Endothelial cell of umbilical vein (primary cell): ENCODE measurements at regions of chr11 and their contacts with region 1.

Region 1: GRCh38 chr11:104404419-104405175 is 240.7 kb upstream of the PDGFD start:
- DNase-seq: no peak
- H3K4me3 ChIP-seq: no peak overlapping the region
- H3K27ac ChIP-seq: no peak overlapping the region
- H3K4me1 ChIP-seq: no peaks in the 10 kb centered on the region
- H3K27me3 ChIP-seq: no peaks in the 10 kb centered on the region
- CTCF ChIP-seq: no peak
- POLR2A ChIP-seq: no peak

Region 2: GRCh38 chr11:104394508-104394907 is 10.1 kb before region 1 on chr11:
- CTCF ChIA-PET with region 1: interaction called, 5 read pairs
- POLR2A ChIA-PET with region 1: no interaction called
- dilution Hi-C with region 1: no loop called
- intact Hi-C with region 1: loop called (anchors 1 kb)
- DNase-seq: no peak
- H3K4me3 ChIP-seq: no peak overlapping the region
- H3K27ac ChIP-seq: no peak overlapping the region
- H3K4me1 ChIP-seq: no peaks in the 10 kb centered on the region
- H3K27me3 ChIP-seq: no peaks in the 10 kb centered on the region
- CTCF ChIP-seq: no peak
- POLR2A ChIP-seq: no peak